Ovary (tissue), 10 donors: ENCODE measurements at regions of chr17 and their contacts with region 1.

Region 1: GRCh38 chr17:31570951-31571892 is 179.7 kb downstream of the RAB11FIP4 start:
- DNase-seq: peak; percentile 88 to 94 (median 93)
- H3K4me3 ChIP-seq: no peak overlapping the region
- H3K27ac ChIP-seq: peak overlapping the region; percentile 23 to 72
- H3K4me1 ChIP-seq: peaks cover 28% of the 10 kb centered on the region
- H3K27me3 ChIP-seq: no peaks in the 10 kb centered on the region
- CTCF ChIP-seq: no peak
- EP300 ChIP-seq: peak; percentile 33
- POLR2A ChIP-seq: no peak

Region 2: DNA sequence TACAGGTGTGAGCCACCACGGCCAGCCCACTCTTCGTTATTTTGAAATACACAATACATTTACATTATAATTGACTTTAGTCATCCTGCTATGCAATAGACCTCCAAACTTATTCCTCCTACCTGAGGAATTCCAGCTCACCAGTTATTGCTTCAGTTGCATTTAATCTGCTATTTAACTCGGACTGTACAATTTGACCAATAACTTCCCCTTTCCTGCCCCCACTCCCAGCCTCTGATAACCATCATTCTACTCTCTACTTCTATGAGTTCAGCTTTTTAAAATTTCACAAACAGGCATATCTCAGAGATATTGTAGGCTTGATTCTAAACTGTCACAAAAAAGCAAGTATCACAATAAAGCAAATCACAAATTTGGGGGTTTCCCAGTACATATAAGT is 130.8 kb after region 1 on chr17:
- intact Hi-C with region 1: loop called in 1 of 4 experiments (anchors 10 kb)
- DNase-seq: no peak
- H3K4me3 ChIP-seq: no peak overlapping the region
- H3K27ac ChIP-seq: no peak overlapping the region
- H3K4me1 ChIP-seq: no peaks in the 10 kb centered on the region
- H3K27me3 ChIP-seq: no peaks in the 10 kb centered on the region
- CTCF ChIP-seq: no peak
- EP300 ChIP-seq: no peak
- POLR2A ChIP-seq: no peak